MCF 10A (cell line): ENCODE measurements at regions of chr6 and their contacts with region 1.

Region 1: DNA sequence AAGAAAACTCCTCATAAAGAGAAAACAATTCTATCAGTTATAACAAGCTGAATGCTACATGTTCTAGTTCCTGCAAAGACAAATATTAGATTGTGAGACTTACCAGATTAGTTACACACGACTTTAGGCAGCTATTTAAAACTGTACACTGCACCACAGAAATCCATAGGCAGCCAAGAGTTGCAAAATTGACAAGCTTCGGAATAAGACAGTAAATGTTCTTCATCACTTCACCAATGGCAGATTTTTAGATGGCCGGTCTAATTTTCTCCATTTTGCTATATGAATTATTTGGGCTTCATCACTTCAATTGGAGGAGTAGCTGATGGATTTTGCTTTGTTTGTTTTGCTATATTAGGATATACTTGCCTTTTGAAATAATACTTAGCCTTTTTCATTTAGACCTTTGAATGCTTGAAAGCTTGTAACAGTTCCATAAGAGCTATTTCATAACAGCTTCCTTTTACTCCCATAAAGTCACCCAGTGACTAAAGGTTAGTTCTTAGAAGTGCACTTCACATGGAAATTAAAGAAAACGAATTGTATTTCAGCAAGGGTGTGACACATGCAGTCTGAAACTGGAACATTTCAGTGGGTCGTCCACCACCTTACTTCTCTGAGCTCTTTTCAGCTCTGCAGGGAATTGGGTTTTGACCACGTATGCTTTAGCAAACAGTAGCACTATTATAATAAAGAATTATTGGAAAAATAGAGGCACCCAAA is at the start of gene ROS1:
- DNase-seq: peak; percentile 70
- H3K4me3 Mint-ChIP-seq: peak within 1 kb of the TSS; percentile 79
- H3K27ac Mint-ChIP-seq: peak within 1 kb of the TSS; percentile 76
- H3K4me1 Mint-ChIP-seq: peaks cover 24% of the 10 kb centered on the region
- H3K27me3 Mint-ChIP-seq: no peaks in the 10 kb centered on the region
- CTCF ChIP-seq: no peak
- total RNA-seq, gene ROS1: 63.0 and 69.6 TPM in 2 replicates

Region 2: GRCh38 chr6:117389227-117390057 is 36.1 kb before region 1 on chr6:
- CTCF ChIA-PET with region 1: no interaction called
- POLR2A ChIA-PET with region 1: interaction called, 20 read pairs
- intact Hi-C with region 1: no loop called
- DNase-seq: peak; percentile 90
- H3K4me3 Mint-ChIP-seq: no peak overlapping the region
- H3K27ac Mint-ChIP-seq: peak overlapping the region; percentile 73
- H3K4me1 Mint-ChIP-seq: peaks cover 32% of the 10 kb centered on the region
- H3K27me3 Mint-ChIP-seq: no peaks in the 10 kb centered on the region
- CTCF ChIP-seq: no peak